PC-9 (cell line): ENCODE measurements at regions of chr12 and their contacts with region 1.

Region 1: GRCh38 chr12:113152835-113153814 is 3.6 kb downstream of the CFAP73 start:
- DNase-seq: peak; percentile 67 to 81
- H3K4me3 ChIP-seq: peak overlapping the region; percentile 61
- H3K27ac ChIP-seq: no peak overlapping the region
- H3K4me1 ChIP-seq: peaks cover 18% of the 10 kb centered on the region; the same call in 1 of the 2 replicates
- H3K27me3 ChIP-seq: no peaks in the 10 kb centered on the region
- CTCF ChIP-seq: peak; percentile 56

Region 2: GRCh38 chr12:111585690-111586089 is 1567.4 kb before region 1 on chr12:
- CTCF ChIA-PET with region 1: no interaction called
- POLR2A ChIA-PET with region 1: interaction called, 14 read pairs
- intact Hi-C with region 1: no loop called
- DNase-seq: no peak
- H3K4me3 ChIP-seq: no peak overlapping the region
- H3K27ac ChIP-seq: 0 out of 2 replicates have a peak overlapping the region, but pooled peaks have one; percentile 3
- H3K4me1 ChIP-seq: peaks cover 5% of the 10 kb centered on the region; the same call in 1 of the 2 replicates
- H3K27me3 ChIP-seq: no peaks in the 10 kb centered on the region
- CTCF ChIP-seq: no peak

Region 3: DNA sequence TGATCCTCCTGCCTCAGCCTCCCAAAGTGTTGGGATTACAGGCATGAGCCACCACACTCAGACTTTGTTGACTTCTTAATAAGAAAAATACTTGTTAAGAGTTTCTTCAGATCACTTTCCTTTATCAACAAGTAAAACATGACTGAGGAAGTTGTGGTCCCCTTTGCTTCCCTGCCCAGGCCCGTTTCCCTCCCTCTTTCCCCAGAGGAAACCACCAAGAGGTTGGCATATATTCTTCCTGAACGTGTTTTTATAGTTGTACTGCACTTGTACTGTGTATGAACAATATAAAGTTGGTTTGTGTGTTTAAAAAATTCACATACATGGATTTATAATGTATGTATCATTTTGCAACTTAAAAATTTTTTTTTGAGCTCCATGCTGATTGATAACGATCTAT is 706.0 kb before region 1 on chr12:
- CTCF ChIA-PET with region 1: no interaction called
- POLR2A ChIA-PET with region 1: no interaction called
- intact Hi-C with region 1: no loop called
- DNase-seq: no peak
- H3K4me3 ChIP-seq: no peak overlapping the region
- H3K27ac ChIP-seq: no peak overlapping the region
- H3K4me1 ChIP-seq: no peaks in the 10 kb centered on the region
- H3K27me3 ChIP-seq: no peaks in the 10 kb centered on the region
- CTCF ChIP-seq: no peak

Region 4: GRCh38 chr12:112992541-112993398 is 160.4 kb before region 1 on chr12:
- CTCF ChIA-PET with region 1: interaction called, 9 read pairs
- POLR2A ChIA-PET with region 1: no interaction called
- intact Hi-C with region 1: loop called (anchors 1 kb)
- DNase-seq: peak; percentile 48 to 56
- H3K4me3 ChIP-seq: no peak overlapping the region
- H3K27ac ChIP-seq: no peak overlapping the region
- H3K4me1 ChIP-seq: no peaks in the 10 kb centered on the region
- H3K27me3 ChIP-seq: peaks cover 10% of the 10 kb centered on the region; the same call in 1 of the 2 replicates
- CTCF ChIP-seq: peak; percentile 97

Region 5: GRCh38 chr12:113098446-113098896 is 54.7 kb before region 1 on chr12:
- CTCF ChIA-PET with region 1: interaction called, 6 read pairs
- POLR2A ChIA-PET with region 1: interaction called, 3 read pairs
- intact Hi-C with region 1: loop called (anchors 1 kb)
- DNase-seq: peak; percentile 90 to 93
- H3K4me3 ChIP-seq: no peak overlapping the region
- H3K27ac ChIP-seq: peak overlapping the region; percentile 24; the same call in 1 of the 2 replicates
- H3K4me1 ChIP-seq: 0 out of 2 replicates have a peak, but pooled peaks cover 4% of the 10 kb centered on the region
- H3K27me3 ChIP-seq: no peaks in the 10 kb centered on the region
- CTCF ChIP-seq: peak; percentile 93

Region 6: DNA sequence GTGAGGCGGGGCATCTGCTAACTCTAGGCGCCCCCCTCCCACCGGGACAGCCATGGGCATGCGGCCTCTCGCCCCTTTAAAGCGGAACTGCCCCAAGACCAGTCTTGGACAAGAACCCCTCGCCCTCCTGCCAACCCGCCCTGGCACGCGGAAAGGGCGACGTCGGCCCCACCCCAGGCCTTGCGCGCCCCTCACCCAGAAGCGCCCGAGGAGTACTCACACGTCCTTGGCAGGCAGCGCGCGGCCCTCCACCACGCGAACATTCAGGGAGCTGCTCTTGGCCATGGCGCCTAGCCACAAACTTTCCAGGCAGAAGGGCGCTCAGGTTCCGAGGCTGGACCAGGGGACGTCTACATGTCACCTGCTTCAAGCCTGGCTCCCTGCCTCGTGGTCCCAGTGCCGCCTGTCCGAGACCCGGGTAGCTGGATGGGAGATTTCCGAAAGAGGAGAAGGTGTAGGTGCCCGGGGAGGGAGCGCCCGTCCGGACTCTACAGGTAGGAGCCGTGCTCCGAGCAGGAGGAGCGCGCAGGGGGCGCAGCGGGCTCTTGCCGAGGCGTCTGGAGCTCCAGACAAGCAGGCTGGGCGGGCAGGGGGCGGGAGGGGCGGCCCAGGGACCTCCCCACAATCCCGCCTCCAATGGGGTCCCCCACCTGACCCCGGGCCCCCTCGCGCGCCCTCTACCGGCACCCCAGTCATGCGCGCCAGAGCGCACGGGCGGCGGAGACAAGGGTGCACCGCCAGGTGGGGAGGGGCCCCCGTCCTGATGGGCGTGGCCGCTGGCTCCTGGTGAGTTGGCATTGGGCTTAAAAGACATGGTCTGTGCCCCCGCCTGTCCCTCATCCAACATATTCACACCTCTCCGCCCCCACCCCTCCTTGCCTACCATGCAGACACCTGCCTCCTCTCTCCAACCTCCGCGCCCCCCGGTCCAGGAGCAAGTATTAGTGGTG is 17.7 kb before region 1 on chr12 and contains the start of gene RASAL1:
- CTCF ChIA-PET with region 1: interaction called, 21 read pairs
- POLR2A ChIA-PET with region 1: no interaction called
- intact Hi-C with region 1: loop called (anchors 2 kb)
- DNase-seq: peak; percentile 74 to 97
- H3K4me3 ChIP-seq: peak within 1 kb of the TSS; percentile 91
- H3K27ac ChIP-seq: peak within 1 kb of the TSS; percentile 93
- H3K4me1 ChIP-seq: peaks cover 38% of the 10 kb centered on the region
- H3K27me3 ChIP-seq: no peaks in the 10 kb centered on the region
- CTCF ChIP-seq: peak; percentile 73
- total RNA-seq, gene RASAL1: 14.9 and 23.6 TPM in 2 replicates

Region 7: DNA sequence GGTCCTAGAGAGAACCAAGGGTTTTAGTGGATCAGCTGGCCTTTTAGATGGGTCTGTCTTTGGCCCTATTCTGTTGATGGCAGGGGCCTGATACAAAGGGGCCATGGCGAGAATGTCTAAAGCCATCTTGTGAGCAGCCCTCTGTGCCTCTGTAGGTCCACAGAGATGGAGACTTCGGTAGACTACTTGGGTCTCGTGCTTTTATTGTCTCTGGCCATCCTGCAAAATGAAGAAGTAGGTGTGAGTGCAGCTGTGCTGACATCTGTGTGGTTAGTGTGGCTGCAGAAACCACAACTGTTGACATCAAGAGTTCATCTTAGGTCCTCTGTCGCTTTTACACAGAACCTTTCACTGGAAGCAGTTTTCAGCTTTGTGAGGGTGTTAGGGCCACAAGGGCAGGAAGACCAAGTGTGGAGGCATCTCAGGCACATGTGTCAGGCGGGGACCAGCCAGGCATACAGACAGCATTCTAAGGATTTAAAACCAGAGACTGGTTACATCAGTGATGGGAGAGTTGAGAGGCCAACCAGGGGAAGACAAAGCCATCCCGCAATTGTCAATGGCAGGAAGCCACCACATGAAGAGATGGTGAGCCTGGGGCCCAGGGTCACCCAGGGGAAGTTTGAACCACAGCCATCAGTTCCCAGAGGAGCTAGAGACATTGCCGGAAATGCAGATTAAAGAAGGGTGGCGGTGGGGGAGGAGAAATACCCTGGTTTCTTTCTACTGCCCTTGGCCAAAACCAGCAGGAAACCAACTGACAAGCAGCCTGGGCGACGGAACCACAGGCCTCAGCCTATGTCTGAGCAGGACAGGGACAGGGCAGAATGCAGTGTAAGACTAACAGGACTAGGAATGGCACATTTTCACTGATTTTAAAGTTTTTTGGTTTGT is 55.2 kb after region 1 on chr12:
- CTCF ChIA-PET with region 1: no interaction called
- POLR2A ChIA-PET with region 1: no interaction called
- intact Hi-C with region 1: no loop called
- DNase-seq: no peak
- H3K4me3 ChIP-seq: no peak overlapping the region
- H3K27ac ChIP-seq: no peak overlapping the region
- H3K4me1 ChIP-seq: peaks cover 12% of the 10 kb centered on the region
- H3K27me3 ChIP-seq: no peaks in the 10 kb centered on the region
- CTCF ChIP-seq: no peak